ENCODE measurements at regions of chr1 and their contacts with region 1.

Region 1: GRCh38 chr1:5658340-5659316 is 333.6 kb downstream of the NPHP4 start:
- DNase-seq: no peak
- H3K4me3 ChIP-seq: no peak overlapping the region
- H3K27ac ChIP-seq: no peak overlapping the region
- H3K4me1 ChIP-seq: no peaks in the 10 kb centered on the region
- H3K27me3 ChIP-seq: no peaks in the 10 kb centered on the region
- CTCF ChIP-seq: no peak
- EP300 ChIP-seq: no peak
- POLR2A ChIP-seq: no peak

Region 2: DNA sequence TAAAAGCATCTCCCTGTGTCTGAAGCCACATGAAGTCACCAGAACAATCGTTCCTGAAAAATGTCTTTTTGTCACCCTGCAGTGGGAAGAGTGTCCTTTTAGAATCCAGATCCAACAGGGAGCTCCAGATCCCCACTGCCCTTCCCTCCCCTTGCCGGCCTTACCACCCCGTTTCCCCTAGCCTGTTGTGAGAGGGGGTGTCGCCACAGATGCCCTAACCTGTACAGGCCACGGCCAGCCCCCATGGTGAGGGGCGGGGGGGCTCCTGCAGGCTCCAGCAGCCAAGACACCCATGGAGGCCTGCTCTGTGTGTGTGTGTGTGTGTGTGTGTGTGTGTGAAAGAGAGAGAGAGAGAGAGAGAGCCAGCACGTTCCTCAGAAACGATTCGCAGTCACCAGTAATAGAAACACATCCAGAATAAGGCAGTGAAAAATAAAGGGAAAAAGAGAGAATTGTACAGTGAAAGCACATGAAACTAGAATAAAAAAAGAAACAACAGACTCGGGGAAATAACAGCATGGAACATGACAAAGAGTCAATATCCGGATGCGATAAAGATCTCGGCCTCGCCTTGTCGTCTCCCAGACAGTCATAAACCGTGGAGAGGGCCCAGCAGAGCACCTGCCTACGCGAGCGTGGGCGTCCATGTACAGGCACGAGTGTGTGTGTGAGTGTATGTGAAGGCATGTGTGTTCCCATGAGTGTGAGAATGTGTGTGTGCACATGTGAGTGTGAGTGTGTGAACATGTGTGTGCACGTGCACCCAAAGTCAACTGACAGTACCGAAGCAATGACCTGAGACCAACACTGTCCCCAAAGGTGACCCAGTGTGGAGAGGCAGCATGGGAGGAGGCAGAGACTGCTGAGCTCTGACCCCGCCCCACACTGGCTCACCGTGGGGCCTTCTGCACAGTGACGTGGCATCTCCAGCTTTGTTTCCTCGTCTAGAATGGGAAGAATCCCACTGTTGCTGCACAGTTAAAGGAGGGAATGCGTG is 29.8 kb after region 1 on chr1:
- intact Hi-C with region 1: no loop called
- DNase-seq: no peak
- H3K4me3 ChIP-seq: no peak overlapping the region
- H3K27ac ChIP-seq: no peak overlapping the region
- H3K4me1 ChIP-seq: no peaks in the 10 kb centered on the region
- H3K27me3 ChIP-seq: no peaks in the 10 kb centered on the region
- CTCF ChIP-seq: no peak
- EP300 ChIP-seq: no peak
- POLR2A ChIP-seq: no peak

Region 3: GRCh38 chr1:5707566-5708340 is 49.1 kb after region 1 on chr1:
- intact Hi-C with region 1: loop called in 1 of 4 experiments (anchors 1 kb)
- DNase-seq: peak in 1 of 5 donors; percentile 8
- H3K4me3 ChIP-seq: no peak overlapping the region
- H3K27ac ChIP-seq: no peak overlapping the region
- H3K4me1 ChIP-seq: no peaks in the 10 kb centered on the region
- H3K27me3 ChIP-seq: no peaks in the 10 kb centered on the region
- CTCF ChIP-seq: no peak
- EP300 ChIP-seq: no peak
- POLR2A ChIP-seq: no peak